BJ (cell line): ENCODE measurements at regions of chr1 and their contacts with region 1.

Region 1: DNA sequence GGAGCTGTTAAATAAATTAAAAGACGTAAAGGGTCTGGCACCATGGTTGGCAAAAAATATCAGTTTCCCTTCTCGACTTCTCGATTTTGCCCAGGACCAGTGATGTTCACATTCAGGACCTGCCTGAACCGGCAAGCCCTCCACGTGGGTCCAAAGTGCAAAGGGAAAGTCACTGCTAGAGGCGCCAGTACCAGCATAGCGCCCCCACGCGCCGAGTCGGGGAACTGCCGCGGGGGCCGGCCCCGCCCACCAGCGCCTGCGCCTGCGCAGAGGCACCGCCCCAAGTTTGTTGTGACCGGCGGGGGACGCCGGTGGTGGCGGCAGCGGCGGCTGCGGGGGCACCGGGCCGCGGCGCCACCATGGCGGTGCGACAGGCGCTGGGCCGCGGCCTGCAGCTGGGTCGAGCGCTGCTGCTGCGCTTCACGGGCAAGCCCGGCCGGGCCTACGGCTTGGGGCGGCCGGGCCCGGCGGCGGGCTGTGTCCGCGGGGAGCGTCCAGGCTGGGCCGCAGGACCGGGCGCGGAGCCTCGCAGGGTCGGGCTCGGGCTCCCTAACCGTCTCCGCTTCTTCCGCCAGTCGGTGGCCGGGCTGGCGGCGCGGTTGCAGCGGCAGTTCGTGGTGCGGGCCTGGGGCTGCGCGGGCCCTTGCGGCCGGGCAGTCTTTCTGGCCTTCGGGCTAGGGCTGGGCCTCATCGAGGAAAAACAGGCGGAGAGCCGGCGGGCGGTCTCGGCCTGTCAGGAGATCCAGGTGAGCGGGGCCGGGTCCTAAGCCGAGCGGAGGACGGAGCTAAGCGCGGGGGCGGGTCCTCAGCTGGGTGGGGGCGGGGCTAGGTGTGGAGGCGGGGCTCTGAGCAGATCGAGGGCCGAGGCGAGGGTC is at the start of gene PINK1:
- DNase-seq: no peak
- H3K4me3 ChIP-seq: peak within 1 kb of the TSS; percentile 87
- H3K27me3 ChIP-seq: no peaks in the 10 kb centered on the region
- CTCF ChIP-seq: peak; percentile 83
- polyA plus RNA-seq, gene PINK1: 65.8 and 89.2 TPM in 2 replicates

Region 2: DNA sequence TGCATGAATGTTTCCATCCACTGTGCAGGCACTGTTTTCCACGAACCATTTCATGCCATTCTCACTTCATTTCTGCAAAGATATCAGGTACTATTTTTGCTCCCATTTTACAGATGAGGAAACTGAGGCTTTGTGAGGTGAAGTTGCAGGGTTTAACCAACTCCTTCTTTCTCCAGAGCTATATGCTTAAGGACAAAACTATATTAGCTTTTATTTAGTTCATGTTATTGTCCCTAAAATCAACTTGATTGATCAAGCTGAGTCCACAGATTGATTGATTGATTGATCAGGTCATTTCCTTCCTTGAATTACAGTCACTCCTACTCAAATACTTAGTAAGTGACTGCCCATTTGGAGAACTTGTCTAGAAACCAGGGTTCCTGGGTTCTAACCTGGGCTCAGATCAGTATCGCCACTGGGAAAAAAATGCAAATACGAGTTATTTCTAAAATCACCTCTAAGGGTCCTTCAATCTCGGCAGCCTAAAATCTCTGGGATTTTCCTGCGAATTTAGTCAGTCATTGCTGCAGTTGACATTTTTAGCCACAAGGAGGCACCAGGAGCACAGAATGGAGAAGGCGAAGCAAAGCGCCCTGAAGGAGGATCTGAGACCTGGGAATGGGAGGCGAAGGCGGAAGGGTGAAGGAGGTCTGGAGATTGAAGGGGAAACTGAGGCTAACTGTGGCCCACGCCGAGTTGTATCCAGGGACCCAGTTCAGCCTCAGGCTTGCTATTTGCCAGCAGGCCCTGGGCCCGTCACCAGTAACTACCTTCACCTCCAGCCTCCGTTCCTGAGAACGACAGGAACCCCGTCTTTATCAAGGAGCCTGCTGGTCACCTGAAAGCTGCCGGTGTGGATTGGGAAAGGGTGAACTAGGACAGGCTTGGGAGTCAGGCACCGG is 111.2 kb before region 1 on chr1:
- CTCF ChIA-PET with region 1: interaction called, 59 read pairs
- POLR2A ChIA-PET with region 1: no interaction called
- DNase-seq: no peak
- H3K4me3 ChIP-seq: no peak overlapping the region
- H3K27me3 ChIP-seq: peaks cover 7% of the 10 kb centered on the region
- CTCF ChIP-seq: peak; percentile 92

Region 3: DNA sequence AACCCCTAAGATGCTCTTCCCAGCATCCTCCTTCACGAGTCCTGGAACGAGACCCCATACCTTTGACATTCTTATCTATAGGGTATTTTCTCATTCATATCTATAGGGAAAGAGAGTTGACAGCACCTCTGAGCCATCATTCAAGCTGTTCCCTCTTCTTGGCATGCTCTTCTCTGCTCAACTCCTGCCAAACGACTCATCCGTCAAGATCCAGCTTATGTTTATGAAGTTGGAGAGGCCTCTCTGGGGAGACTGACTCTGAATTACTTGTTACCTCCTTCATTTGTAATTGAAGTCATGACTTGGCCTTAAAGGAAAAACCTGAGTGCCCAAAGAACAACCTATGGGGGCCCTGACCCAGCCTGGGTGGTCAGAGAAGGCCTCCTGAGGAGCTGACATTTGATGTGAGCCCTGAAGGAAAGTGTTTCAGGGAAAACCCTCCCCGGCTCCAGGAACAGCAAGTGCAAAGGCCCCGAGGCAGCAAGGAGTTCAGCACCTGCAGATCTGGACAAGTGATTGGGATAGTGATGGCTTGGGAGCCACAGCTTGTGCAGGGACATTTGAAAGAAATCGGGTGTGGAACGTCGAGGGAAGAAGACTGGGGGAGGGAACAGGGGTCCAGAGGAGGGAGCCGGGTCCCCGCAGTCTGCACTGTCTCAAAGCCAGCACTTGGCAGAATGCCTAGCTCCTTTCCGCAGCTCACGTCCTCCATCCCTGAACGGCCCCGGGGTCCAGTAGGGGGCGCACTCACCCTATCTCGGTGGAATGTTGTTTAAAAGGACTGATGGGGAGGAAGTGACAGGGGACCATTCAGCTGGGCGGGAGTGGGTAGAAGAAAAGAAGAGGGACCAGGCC is 58.5 kb before region 1 on chr1:
- CTCF ChIA-PET with region 1: interaction called, 125 read pairs
- POLR2A ChIA-PET with region 1: interaction called, 6 read pairs
- DNase-seq: no peak
- H3K4me3 ChIP-seq: no peak overlapping the region
- H3K27me3 ChIP-seq: peaks cover 7% of the 10 kb centered on the region
- CTCF ChIP-seq: peak; percentile 91

Region 4: DNA sequence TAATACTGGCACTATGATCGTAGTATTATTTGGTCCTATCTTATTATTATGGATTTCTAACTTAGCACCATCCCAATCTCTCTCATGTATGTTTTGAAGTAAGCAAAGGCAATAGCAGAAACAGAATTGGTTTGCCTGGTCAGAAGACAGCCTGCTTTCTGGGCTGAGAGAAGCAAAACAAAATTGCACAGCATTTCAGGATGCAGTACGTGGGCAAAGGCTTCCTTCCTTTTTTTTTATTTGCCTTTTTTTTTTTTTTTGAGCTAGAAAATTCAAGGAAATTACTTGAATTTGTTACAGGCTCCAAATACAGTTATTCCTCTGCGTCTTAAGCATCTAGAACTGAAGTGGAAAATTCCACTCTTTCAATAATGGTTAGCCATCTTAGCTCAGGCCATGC is 35.8 kb before region 1 on chr1:
- CTCF ChIA-PET with region 1: interaction called, 19 read pairs
- POLR2A ChIA-PET with region 1: interaction called, 3 read pairs
- DNase-seq: no peak
- H3K4me3 ChIP-seq: no peak overlapping the region
- H3K27me3 ChIP-seq: no peaks in the 10 kb centered on the region
- CTCF ChIP-seq: no peak

Region 5: DNA sequence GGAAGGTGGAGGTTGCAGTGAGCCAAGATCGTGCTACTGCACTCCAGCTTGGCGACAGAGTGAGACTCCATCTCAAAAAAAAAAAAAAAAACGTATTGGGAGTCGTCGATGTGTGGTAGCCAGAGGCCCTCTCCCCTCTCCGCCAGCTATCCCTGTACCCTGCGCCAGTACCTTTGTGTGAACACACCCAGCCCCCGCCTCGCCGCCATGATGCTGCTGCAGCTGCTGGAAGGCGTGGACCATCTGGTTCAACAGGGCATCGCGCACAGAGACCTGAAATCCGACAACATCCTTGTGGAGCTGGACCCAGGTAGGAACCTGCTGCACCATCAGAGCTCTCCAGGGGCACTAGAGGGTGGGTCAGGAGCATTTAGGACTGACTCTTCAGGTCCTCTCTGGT is 12.0 kb after region 1 on chr1:
- CTCF ChIA-PET with region 1: interaction called, 21 read pairs
- POLR2A ChIA-PET with region 1: interaction called, 4 read pairs
- DNase-seq: no peak
- H3K4me3 ChIP-seq: no peak overlapping the region
- H3K27me3 ChIP-seq: no peaks in the 10 kb centered on the region
- CTCF ChIP-seq: no peak